ENCODE measurements at regions of chr4 and their contacts with region 1.

Region 1: DNA sequence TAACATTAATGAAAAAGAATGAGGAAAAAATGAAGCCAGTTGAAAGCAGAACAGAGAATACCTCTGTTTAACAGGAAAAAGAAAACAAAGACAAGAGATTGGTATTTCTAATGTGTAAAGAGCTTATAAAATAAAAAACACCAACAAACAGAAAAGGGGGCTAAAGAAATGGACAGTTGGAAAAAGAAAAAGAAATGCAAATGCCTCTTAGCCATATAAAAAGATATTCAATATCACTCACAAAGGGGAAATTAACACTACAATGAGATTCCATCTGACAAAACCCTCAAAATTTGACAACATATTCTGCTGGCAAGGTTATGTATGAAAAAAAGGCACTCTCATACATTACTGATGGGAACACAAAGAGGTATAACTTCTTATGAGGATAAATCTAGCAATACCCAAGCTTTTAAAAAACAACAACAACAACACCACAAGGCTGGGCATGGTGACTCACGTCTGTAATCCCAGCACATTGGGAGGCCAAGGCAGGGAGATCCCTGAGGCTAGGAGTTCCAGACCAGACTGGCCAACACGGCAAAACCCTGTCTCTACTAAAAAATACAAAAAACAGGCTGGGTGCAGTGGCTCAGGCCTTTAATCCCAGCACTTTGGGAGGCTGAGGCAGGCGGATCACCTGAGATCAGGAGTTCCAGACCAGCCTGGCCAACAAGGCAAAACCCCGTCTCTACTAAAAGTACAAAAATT is 75.8 kb downstream of the FRYL start:
- DNase-seq: no peak
- H3K4me3 Mint-ChIP-seq: no peak overlapping the region
- H3K27ac Mint-ChIP-seq: no peak overlapping the region
- H3K4me1 Mint-ChIP-seq: peaks cover 26% of the 10 kb centered on the region
- H3K27me3 Mint-ChIP-seq: no peaks in the 10 kb centered on the region

Region 2: DNA sequence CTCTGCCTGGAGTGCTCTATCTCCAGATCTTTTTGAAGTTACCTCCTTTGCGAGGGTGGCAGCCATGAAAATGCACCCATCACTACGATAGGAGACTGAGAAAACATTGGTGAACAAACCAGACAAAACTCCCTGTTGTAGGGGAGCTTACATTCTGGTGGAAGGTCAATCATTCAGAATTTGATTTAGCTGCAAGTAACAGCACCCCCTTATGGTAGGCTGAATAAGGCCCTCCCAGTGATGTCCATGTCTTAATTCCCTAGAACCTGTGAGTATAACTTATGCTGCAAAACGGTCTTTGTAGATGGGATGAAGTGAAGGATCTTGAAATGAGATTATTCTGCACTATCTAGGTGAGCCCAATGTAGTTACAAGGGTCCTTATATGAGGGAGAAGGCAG is 429.0 kb before region 1 on chr4:
- intact Hi-C with region 1: no loop called
- DNase-seq: no peak
- H3K4me3 Mint-ChIP-seq: no peak overlapping the region
- H3K27ac Mint-ChIP-seq: no peak overlapping the region
- H3K4me1 Mint-ChIP-seq: peaks cover 13% of the 10 kb centered on the region
- H3K27me3 Mint-ChIP-seq: no peaks in the 10 kb centered on the region

Region 3: GRCh38 chr4:48578132-48578968 is 125.9 kb before region 1 on chr4:
- intact Hi-C with region 1: no loop called
- DNase-seq: peak; percentile 14
- H3K4me3 Mint-ChIP-seq: no peak overlapping the region
- H3K27ac Mint-ChIP-seq: no peak overlapping the region
- H3K4me1 Mint-ChIP-seq: no peaks in the 10 kb centered on the region
- H3K27me3 Mint-ChIP-seq: no peaks in the 10 kb centered on the region

Region 4: GRCh38 chr4:48602222-48602621 is 102.0 kb before region 1 on chr4:
- intact Hi-C with region 1: no loop called
- DNase-seq: no peak
- H3K4me3 Mint-ChIP-seq: no peak overlapping the region
- H3K27ac Mint-ChIP-seq: no peak overlapping the region
- H3K4me1 Mint-ChIP-seq: no peaks in the 10 kb centered on the region
- H3K27me3 Mint-ChIP-seq: no peaks in the 10 kb centered on the region

Region 5: DNA sequence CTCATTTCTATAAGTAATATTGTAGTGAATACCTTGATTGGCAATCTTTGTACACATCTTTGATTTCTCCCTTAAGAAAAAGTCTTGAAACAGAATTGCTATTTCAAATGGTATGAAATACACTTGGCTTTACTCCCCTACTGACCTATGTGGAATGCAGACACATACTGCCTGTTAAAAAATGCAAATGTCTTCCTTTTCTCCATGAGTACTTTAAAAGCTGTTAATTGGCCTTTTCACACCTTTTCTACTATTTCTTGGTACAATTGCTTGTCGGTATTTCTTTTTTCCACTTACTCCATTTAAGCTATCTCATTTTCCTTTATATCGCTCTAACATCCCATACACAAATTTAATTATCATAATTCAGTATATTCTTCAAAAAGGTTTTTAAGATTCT is 11.3 kb before region 1 on chr4:
- intact Hi-C with region 1: no loop called
- DNase-seq: no peak
- H3K4me3 Mint-ChIP-seq: no peak overlapping the region
- H3K27ac Mint-ChIP-seq: no peak overlapping the region
- H3K4me1 Mint-ChIP-seq: peaks cover 8% of the 10 kb centered on the region
- H3K27me3 Mint-ChIP-seq: no peaks in the 10 kb centered on the region

Region 6: GRCh38 chr4:48739560-48740019 is 35.3 kb after region 1 on chr4:
- intact Hi-C with region 1: loop called (anchors 5 kb)
- DNase-seq: no peak
- H3K4me3 Mint-ChIP-seq: no peak overlapping the region
- H3K27ac Mint-ChIP-seq: peak overlapping the region; percentile 62
- H3K4me1 Mint-ChIP-seq: peaks cover 54% of the 10 kb centered on the region
- H3K27me3 Mint-ChIP-seq: no peaks in the 10 kb centered on the region

Region 7: GRCh38 chr4:48830706-48831531 is 126.7 kb after region 1 on chr4 and contains the start of gene OCIAD1:
- intact Hi-C with region 1: loop called (anchors 5 kb)
- DNase-seq: peak; percentile 94
- H3K4me3 Mint-ChIP-seq: peak within 1 kb of the TSS; percentile 100
- H3K27ac Mint-ChIP-seq: peak within 1 kb of the TSS; percentile 100
- H3K4me1 Mint-ChIP-seq: peaks cover 20% of the 10 kb centered on the region
- H3K27me3 Mint-ChIP-seq: peaks cover 8% of the 10 kb centered on the region
- total RNA-seq, gene OCIAD1: 114 and 116 TPM in 2 replicates